ENCODE measurements at regions of chr2 and their contacts with region 1.

Region 1: DNA sequence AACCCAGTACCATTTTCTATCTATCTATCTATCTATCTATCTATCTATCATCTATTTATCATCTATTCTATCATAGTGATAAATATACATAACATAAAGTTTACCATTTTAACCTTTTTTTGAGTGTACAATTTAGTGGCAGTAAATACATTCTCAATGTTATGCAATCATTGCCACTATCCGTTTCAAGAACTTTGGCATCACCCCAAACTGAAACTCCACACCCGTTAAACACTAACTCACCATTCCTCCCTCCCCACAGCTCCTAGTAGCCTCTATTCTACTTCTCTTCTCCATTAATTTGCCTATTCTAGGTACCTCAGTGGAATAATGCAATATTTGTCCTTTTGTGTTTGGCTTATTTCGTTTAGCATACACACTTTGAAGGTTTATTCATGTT is 82.5 kb upstream of the KCNE4 start:
- DNase-seq: no peak
- H3K4me3 ChIP-seq: no peak overlapping the region
- CTCF ChIP-seq: no peak

Region 2: GRCh38 chr2:222919841-222920526 is 49.5 kb before region 1 on chr2:
- CTCF ChIA-PET with region 1: interaction called, 21 read pairs
- POLR2A ChIA-PET with region 1: no interaction called
- DNase-seq: peak; percentile 78
- H3K4me3 ChIP-seq: no peak overlapping the region
- CTCF ChIP-seq: no peak

Region 3: GRCh38 chr2:222959336-222959735 is 10.2 kb before region 1 on chr2:
- CTCF ChIA-PET with region 1: interaction called, 40 read pairs
- POLR2A ChIA-PET with region 1: no interaction called
- DNase-seq: peak; percentile 66
- H3K4me3 ChIP-seq: no peak overlapping the region
- CTCF ChIP-seq: peak; percentile 75

Region 4: GRCh38 chr2:222993920-222994650 is 24.6 kb after region 1 on chr2:
- CTCF ChIA-PET with region 1: interaction called, 12 read pairs
- POLR2A ChIA-PET with region 1: no interaction called
- DNase-seq: peak; percentile 94
- H3K4me3 ChIP-seq: no peak overlapping the region
- CTCF ChIP-seq: no peak

Region 5: GRCh38 chr2:223093436-223094241 is 124.1 kb after region 1 on chr2:
- CTCF ChIA-PET with region 1: interaction called, 52 read pairs
- POLR2A ChIA-PET with region 1: no interaction called
- DNase-seq: no peak
- H3K4me3 ChIP-seq: no peak overlapping the region
- CTCF ChIP-seq: no peak

Region 6: DNA sequence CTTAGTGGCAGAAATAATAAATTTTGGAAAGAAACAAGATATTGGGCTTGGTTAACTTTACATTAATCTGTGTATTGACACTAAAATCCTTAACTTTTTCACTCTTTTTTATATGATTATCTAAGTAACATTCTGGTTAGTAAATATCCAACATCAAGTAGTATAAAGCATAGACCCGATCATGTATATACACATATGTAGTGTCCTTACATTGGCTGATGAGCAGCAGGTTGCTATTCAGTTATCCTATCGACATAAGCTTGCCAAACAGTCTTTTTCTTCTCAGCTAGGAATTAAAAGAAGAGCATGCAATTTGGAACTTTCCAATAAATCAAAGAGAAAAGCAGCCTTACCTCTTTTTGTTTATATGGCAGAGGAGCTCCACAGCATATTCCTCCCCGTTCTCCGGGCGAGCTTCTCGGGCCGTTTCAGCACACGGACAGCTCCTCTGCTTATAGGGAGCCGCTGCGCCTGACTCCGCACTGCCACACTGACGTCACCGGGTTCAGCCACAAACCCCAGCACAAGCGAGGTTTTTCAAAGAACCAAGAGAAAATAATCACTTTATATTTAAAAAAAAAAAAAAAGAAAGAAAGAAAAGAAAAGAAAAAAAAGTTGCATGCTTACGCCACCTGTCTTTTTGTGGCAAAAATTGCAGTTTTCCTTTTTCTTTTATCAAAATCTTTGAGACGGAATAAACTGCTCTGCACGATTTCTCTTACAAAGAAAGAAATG is 632.6 kb after region 1 on chr2 and contains the start of gene SCG2:
- CTCF ChIA-PET with region 1: interaction called, 10 read pairs
- POLR2A ChIA-PET with region 1: no interaction called
- DNase-seq: peak; percentile 60
- H3K4me3 ChIP-seq: peak within 1 kb of the TSS; percentile 20; the same call in 1 of the 2 replicates
- CTCF ChIP-seq: peak; percentile 5

Region 7: DNA sequence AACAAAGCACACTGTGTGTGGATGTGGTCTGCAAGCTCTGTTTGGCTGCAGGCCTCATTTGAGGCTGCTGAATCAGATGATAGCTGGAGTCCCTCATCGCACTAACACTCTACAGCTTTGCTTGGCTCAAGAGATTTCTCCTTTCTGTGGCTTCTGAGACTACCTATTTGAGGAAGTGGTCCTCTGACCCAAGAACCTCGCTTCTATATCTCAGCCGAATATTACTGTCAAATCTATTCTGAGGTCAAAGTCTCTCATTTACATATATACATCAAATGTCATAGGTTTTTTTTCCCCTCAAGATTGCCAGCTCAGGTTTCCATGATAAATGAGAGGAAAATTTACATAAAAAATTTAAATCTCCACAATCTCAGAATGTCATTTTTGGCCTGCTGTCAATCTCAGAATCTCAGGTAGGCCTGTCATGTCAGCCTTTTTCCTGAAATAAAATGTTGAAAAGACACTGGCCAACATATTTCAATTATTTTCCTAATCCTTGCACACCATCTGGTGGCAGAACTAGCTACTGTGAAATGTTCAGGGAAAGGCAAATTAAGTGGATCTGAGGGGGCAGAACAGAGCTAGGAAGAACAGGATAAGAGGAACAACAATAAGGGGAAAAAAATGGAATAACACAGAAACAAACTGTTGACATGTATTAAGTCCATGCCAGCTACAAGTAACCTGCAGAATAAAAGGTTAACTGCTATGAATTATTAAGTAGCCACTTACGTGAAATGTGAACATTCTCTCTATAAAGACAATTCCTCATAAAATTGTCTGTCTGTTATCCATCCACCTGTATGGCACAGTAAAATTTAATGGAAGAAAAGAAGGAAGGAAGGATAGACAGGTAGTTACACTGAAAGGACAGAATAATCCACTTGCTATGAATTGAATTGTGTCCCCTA is 828.6 kb after region 1 on chr2:
- CTCF ChIA-PET with region 1: interaction called, 63 read pairs
- POLR2A ChIA-PET with region 1: no interaction called
- DNase-seq: no peak
- H3K4me3 ChIP-seq: no peak overlapping the region
- CTCF ChIP-seq: peak; percentile 63